WTC11 (cell line): ENCODE measurements at regions of chr11 and their contacts with region 1.

Region 1: DNA sequence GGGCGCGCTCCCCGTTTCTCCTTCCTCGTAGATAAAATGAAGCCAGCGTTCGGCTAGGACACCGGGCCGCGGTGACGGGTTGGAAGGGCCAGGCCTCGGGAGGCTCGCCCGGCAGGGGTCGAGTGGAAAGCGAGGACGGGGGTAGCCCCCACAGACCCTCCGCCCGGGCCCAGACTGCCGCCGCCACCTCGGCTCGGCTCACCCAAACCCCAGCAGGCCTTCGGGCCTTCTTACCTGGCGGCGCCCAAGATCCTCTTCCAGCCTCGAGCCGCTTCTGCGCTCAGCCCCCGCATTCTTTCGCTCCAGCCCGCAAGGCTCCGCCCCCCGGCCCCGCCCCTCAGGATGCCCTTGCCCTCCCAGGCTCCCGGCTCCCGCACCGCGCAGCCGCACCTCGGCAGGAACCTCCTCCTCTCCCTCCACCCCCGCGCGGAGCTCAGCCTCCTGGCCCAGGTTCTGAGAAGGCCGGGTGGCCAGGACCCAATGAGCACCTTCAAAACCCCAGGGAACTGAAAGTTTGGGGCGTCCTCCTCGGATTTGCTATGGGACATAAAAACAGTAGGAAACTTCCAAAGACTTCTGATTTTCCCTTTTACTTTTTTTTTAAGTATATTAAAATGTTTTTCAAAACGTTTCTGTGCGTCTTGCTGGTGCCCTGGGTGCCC is at the start of gene CD59:
- DNase-seq: peak; percentile 99
- ATAC-seq: peak; percentile 93
- H3K4me3 Mint-ChIP-seq: peak within 1 kb of the TSS; percentile 78
- H3K27ac Mint-ChIP-seq: no peak within 1 kb of the TSS
- H3K4me1 Mint-ChIP-seq: peaks cover 26% of the 10 kb centered on the region
- H3K27me3 Mint-ChIP-seq: peaks cover 12% of the 10 kb centered on the region
- CTCF ChIP-seq: no peak
- total RNA-seq, gene CD59: 65.8 to 86.7 TPM (median 79.7 TPM) in 3 replicates

Region 2: DNA sequence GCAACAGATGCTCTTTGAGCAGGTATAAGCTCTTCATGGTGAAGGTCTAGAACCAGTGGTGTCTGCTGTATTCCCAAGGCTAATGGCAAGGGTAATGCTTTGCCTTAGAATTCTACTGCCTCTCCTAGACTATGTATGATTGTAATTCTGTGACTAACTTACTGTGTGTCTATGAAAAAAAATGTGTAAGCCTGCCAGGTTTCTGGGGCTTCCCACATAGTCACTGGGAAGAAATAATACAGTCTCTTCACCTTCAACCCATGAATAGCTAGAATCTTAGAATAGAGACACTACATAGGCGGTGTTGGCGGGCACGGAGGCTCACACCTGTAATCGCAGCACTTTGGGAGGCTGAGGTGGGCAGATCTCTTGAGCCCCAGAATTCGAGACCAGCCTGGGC is 119.7 kb before region 1 on chr11:
- CTCF ChIA-PET with region 1: no interaction called
- POLR2A ChIA-PET with region 1: no interaction called
- DNase-seq: no peak
- ATAC-seq: no peak
- H3K4me3 Mint-ChIP-seq: no peak overlapping the region
- H3K27ac Mint-ChIP-seq: no peak overlapping the region
- H3K4me1 Mint-ChIP-seq: peaks cover 15% of the 10 kb centered on the region
- H3K27me3 Mint-ChIP-seq: no peaks in the 10 kb centered on the region
- CTCF ChIP-seq: no peak

Region 3: GRCh38 chr11:33633241-33633901 is 102.9 kb before region 1 on chr11:
- CTCF ChIA-PET with region 1: no interaction called
- POLR2A ChIA-PET with region 1: no interaction called
- DNase-seq: no peak
- ATAC-seq: peak; percentile 67
- H3K4me3 Mint-ChIP-seq: no peak overlapping the region
- H3K27ac Mint-ChIP-seq: peak overlapping the region; percentile 47
- H3K4me1 Mint-ChIP-seq: peaks cover 7% of the 10 kb centered on the region
- H3K27me3 Mint-ChIP-seq: peaks cover 3% of the 10 kb centered on the region; the same call in 1 of the 2 replicates
- CTCF ChIP-seq: no peak

Region 4: DNA sequence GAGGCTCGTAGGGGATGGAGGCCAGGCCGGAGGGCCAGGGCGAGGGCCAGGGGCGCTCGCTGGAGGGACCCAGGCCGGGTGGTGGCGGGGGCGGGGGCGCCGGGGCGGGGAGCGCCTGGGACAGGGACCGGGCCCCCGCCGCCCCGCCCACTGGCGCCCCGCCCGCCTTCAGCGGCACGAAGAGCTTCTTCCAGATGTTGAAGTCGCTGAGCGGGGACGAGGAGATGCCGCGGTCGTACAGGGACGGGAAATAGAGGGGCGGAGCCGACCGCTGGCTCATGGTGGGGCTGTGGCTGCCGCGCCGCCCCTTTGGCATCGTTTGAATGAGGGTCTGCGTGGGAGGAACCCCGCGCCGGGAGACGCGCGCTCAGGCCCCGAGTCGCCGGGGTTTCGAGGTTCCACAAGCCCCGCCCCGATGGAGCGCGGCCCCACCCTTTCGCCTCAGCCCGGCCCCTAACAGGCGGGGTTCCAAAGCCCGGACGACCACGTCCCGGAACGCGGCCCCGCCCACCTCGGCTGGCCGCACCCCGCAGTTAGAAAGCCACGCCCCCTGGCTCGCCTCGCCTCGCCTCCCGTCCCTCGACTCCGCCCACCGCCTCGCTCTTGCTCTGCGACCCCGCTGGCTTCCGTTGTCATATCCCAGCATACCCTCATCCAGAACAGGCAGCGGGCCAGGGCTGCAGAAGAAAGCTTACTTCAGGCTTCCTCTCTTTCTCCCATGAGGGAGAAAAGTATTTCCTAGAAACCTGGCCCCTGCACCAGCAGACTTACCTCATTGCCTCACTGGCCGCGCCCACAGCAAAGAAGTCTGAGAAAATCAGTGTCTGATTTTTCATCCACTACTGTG is 35.6 kb before region 1 on chr11 and contains the start of gene C11orf91:
- CTCF ChIA-PET with region 1: interaction called, 6 read pairs
- POLR2A ChIA-PET with region 1: interaction called, 10 read pairs
- DNase-seq: peak; percentile 98
- ATAC-seq: peak; percentile 92
- H3K4me3 Mint-ChIP-seq: peak within 1 kb of the TSS; percentile 80
- H3K27ac Mint-ChIP-seq: peak within 1 kb of the TSS; percentile 73
- H3K4me1 Mint-ChIP-seq: peaks cover 30% of the 10 kb centered on the region
- H3K27me3 Mint-ChIP-seq: peaks cover 16% of the 10 kb centered on the region
- CTCF ChIP-seq: no peak
- total RNA-seq, gene C11orf91: 0.22 TPM in 1 of 3 replicates, not detected in the others

Region 5: GRCh38 chr11:33722579-33723225 is 13.6 kb before region 1 on chr11:
- CTCF ChIA-PET with region 1: no interaction called
- POLR2A ChIA-PET with region 1: no interaction called
- DNase-seq: no peak
- ATAC-seq: no peak
- H3K4me3 Mint-ChIP-seq: no peak overlapping the region
- H3K27ac Mint-ChIP-seq: no peak overlapping the region
- H3K4me1 Mint-ChIP-seq: peaks cover 16% of the 10 kb centered on the region
- H3K27me3 Mint-ChIP-seq: no peaks in the 10 kb centered on the region
- CTCF ChIP-seq: no peak

Region 6: GRCh38 chr11:33829433-33830141 is 93.3 kb after region 1 on chr11:
- CTCF ChIA-PET with region 1: interaction called, 10 read pairs
- POLR2A ChIA-PET with region 1: no interaction called
- DNase-seq: peak; percentile 65
- ATAC-seq: peak; percentile 88
- H3K4me3 Mint-ChIP-seq: peak overlapping the region; percentile 89
- H3K27ac Mint-ChIP-seq: no peak overlapping the region
- H3K4me1 Mint-ChIP-seq: no peaks in the 10 kb centered on the region; the same call in 1 of the 2 replicates
- H3K27me3 Mint-ChIP-seq: peaks cover 39% of the 10 kb centered on the region
- CTCF ChIP-seq: peak; percentile 32